Dendritic cell treated with granulocyte-macrophage colony-stimulating factor and Interleukin-4, amounts not matched to agents 40 ng/mL and 50 ng/mL, for 4 days (primary cell): ENCODE measurements at regions of chr7 and their contacts with region 1.

Region 1: DNA sequence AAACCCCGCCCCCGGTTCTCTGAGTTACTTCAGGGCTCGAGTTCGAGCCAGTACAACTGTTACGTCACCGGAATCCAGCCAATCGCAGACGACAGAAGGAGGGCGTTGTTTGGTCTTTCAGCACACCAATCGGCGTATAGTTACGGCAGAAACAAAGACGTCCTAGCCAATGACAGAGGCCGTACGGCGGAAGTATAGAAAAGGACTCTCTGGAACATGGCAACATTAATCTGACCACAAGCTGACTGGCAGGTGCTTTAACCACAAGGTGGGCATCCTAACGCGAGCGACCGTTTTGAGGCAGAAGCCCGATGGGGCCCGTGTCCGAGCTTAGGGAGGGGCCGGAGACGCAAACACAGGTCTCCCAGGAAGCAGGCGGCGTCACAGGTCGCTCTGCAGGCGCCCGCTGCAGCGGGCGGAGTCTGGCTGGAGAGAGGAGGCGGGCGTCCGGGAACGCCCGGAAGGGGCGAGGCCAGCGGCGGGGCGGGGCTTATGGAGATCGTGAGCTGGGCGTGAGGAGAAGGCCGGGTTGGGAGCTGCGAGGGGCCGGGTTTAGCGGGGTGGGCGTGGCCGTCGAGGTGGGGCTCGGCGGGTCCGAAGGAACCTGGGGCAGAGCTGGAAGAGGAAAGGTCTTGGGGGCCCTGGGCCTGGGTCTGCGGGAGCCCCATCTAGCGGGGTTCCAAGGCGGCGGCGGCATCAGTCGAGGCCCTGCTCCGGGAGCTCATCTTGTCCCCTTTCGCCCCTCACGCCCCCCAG is at the start of gene MOSPD3:
- H3K4me3 Mint-ChIP-seq: peak within 1 kb of the TSS; percentile 96
- H3K27ac Mint-ChIP-seq: peak within 1 kb of the TSS; percentile 100
- H3K4me1 Mint-ChIP-seq: peaks cover 38% of the 10 kb centered on the region
- H3K27me3 Mint-ChIP-seq: peaks cover 7% of the 10 kb centered on the region

Region 2: GRCh38 chr7:100626530-100627237 is 14.5 kb after region 1 on chr7:
- intact Hi-C with region 1: loop called (anchors 2 kb)
- H3K4me3 Mint-ChIP-seq: peak overlapping the region; percentile 63
- H3K27ac Mint-ChIP-seq: no peak overlapping the region
- H3K4me1 Mint-ChIP-seq: peaks cover 33% of the 10 kb centered on the region
- H3K27me3 Mint-ChIP-seq: peaks cover 31% of the 10 kb centered on the region